WTC11 (cell line): ENCODE measurements at regions of chr1 and their contacts with region 1.

Region 1: GRCh38 chr1:113042285-113043143 is 30.5 kb upstream of the LRIG2 start:
- DNase-seq: peak; percentile 87
- ATAC-seq: peak; percentile 82
- H3K4me3 Mint-ChIP-seq: peak overlapping the region; percentile 45
- H3K27ac Mint-ChIP-seq: peak overlapping the region; percentile 100
- H3K4me1 Mint-ChIP-seq: peaks cover 62% of the 10 kb centered on the region
- H3K27me3 Mint-ChIP-seq: no peaks in the 10 kb centered on the region; the same call in 1 of the 2 replicates
- CTCF ChIP-seq: 0 out of 2 replicates have a peak, but pooled peaks have one; percentile 22

Region 2: DNA sequence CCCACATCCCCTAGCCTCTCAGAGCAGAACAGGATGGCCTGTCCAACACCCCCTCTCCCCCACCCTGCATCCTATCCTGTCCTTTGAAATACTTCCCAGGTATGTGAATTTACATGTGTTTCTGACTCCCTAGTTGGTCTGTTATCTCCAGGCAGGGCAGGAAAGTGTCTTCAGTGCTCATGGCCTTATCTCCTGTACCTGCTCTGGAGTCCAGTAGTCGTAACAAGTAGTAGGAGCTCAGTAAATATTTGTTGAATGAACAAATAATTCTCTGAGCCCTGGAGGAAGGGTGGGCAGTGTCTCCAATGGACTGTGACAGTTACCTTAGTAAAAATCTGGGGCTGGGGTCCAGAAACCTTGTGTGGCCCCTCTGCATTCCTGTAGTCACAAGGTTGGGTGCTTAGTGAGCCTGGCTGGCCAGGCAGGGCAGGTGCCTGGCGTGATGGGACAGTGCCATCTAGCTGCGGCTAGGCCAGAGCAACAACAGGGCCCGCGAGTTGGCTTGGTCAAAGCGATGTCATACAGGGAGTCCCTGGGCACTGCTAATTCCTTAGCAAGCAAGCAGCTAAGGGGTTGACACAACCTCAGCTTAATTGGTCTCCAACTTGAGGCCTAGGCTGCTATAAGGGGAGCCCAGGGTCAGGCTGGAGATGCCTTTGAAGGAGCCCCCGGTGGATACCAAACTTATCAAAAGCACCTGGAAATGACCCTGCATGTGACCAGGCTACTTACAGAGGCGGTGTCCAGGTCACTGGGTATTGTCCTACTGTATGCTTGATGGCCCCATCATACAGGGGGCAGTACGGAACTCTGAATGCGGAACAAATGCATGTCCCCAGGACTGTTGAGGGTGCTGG is 238.4 kb before region 1 on chr1:
- CTCF ChIA-PET with region 1: interaction called, 25 read pairs
- POLR2A ChIA-PET with region 1: interaction called, 4 read pairs
- DNase-seq: peak; percentile 85
- ATAC-seq: peak; percentile 93
- H3K4me3 Mint-ChIP-seq: no peak overlapping the region
- H3K27ac Mint-ChIP-seq: no peak overlapping the region; the same call in 1 of the 2 replicates
- H3K4me1 Mint-ChIP-seq: peaks cover 49% of the 10 kb centered on the region
- H3K27me3 Mint-ChIP-seq: peaks cover 29% of the 10 kb centered on the region
- CTCF ChIP-seq: peak; percentile 50

Region 3: GRCh38 chr1:112818990-112819689 is 223.4 kb before region 1 on chr1:
- CTCF ChIA-PET with region 1: interaction called, 16 read pairs
- POLR2A ChIA-PET with region 1: no interaction called
- DNase-seq: no peak
- ATAC-seq: no peak
- H3K4me3 Mint-ChIP-seq: peak overlapping the region; percentile 14; the same call in 1 of the 2 replicates
- H3K27ac Mint-ChIP-seq: peak overlapping the region; percentile 98
- H3K4me1 Mint-ChIP-seq: peaks cover 45% of the 10 kb centered on the region
- H3K27me3 Mint-ChIP-seq: no peaks in the 10 kb centered on the region
- CTCF ChIP-seq: no peak

Region 4: DNA sequence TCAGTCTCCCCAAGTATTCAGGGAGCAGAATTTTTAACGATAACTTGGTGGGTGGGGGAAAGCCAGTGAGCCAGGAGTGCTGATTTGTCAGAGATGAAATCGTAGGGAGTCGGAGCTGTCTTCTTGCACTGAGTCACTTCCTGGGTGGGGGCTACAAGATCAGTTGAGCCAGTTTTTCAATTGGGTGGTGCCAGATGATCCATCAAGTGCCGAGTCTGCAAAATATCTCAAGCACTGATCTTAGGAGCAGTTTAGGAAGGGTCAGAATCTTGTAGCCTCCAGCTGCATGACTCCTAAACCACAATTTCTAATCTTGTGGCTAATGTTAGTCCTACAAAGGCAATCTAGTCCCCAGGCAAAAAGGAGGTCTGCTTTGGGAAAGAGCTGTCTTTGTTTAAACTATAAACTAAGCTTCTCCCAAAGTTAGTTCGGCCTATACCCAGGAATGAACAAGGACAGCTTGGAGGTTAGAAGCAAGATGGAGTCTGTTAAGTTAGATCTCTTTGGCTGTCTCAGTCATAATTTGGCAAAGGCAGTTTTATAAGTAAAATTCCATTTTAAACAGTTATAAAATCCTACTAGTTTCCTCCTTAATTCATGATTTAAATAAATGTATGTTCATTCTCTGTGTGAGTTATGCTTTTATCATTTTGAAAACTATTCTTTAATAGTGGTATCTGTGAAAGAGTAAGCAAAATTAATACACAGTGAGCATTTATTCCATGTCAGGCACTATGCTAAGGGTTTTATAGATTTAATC is 138.3 kb before region 1 on chr1:
- CTCF ChIA-PET with region 1: interaction called, 19 read pairs
- POLR2A ChIA-PET with region 1: interaction called, 4 read pairs
- DNase-seq: no peak
- ATAC-seq: no peak
- H3K4me3 Mint-ChIP-seq: no peak overlapping the region
- H3K27ac Mint-ChIP-seq: peak overlapping the region; percentile 55
- H3K4me1 Mint-ChIP-seq: peaks cover 55% of the 10 kb centered on the region
- H3K27me3 Mint-ChIP-seq: no peaks in the 10 kb centered on the region
- CTCF ChIP-seq: no peak

Region 5: GRCh38 chr1:112950426-112950825 is 92.1 kb before region 1 on chr1:
- CTCF ChIA-PET with region 1: interaction called, 28 read pairs
- POLR2A ChIA-PET with region 1: interaction called, 17 read pairs
- DNase-seq: no peak
- ATAC-seq: no peak
- H3K4me3 Mint-ChIP-seq: peak overlapping the region; percentile 24
- H3K27ac Mint-ChIP-seq: peak overlapping the region; percentile 73
- H3K4me1 Mint-ChIP-seq: peaks cover 52% of the 10 kb centered on the region
- H3K27me3 Mint-ChIP-seq: no peaks in the 10 kb centered on the region
- CTCF ChIP-seq: no peak

Region 6: GRCh38 chr1:113007706-113008364 is 34.7 kb before region 1 on chr1:
- CTCF ChIA-PET with region 1: no interaction called
- POLR2A ChIA-PET with region 1: no interaction called
- DNase-seq: no peak
- ATAC-seq: no peak
- H3K4me3 Mint-ChIP-seq: no peak overlapping the region
- H3K27ac Mint-ChIP-seq: peak overlapping the region; percentile 19; the same call in 1 of the 2 replicates
- H3K4me1 Mint-ChIP-seq: no peaks in the 10 kb centered on the region
- H3K27me3 Mint-ChIP-seq: no peaks in the 10 kb centered on the region
- CTCF ChIP-seq: no peak

Region 7: GRCh38 chr1:113031171-113031933 is 11.2 kb before region 1 on chr1:
- CTCF ChIA-PET with region 1: interaction called, 41 read pairs
- POLR2A ChIA-PET with region 1: interaction called, 9 read pairs
- DNase-seq: no peak
- ATAC-seq: no peak
- H3K4me3 Mint-ChIP-seq: no peak overlapping the region
- H3K27ac Mint-ChIP-seq: peak overlapping the region; percentile 40
- H3K4me1 Mint-ChIP-seq: peaks cover 50% of the 10 kb centered on the region
- H3K27me3 Mint-ChIP-seq: no peaks in the 10 kb centered on the region
- CTCF ChIP-seq: no peak

Region 8: GRCh38 chr1:113153116-113153803 is 110.7 kb after region 1 on chr1:
- CTCF ChIA-PET with region 1: no interaction called
- POLR2A ChIA-PET with region 1: no interaction called
- DNase-seq: no peak
- ATAC-seq: no peak; the same call in 1 of the 2 replicates
- H3K4me3 Mint-ChIP-seq: no peak overlapping the region
- H3K27ac Mint-ChIP-seq: no peak overlapping the region
- H3K4me1 Mint-ChIP-seq: peaks cover 10% of the 10 kb centered on the region
- H3K27me3 Mint-ChIP-seq: peaks cover 3% of the 10 kb centered on the region
- CTCF ChIP-seq: no peak